ENCODE measurements at regions of chr7 and their contacts with region 1.

Region 1: DNA sequence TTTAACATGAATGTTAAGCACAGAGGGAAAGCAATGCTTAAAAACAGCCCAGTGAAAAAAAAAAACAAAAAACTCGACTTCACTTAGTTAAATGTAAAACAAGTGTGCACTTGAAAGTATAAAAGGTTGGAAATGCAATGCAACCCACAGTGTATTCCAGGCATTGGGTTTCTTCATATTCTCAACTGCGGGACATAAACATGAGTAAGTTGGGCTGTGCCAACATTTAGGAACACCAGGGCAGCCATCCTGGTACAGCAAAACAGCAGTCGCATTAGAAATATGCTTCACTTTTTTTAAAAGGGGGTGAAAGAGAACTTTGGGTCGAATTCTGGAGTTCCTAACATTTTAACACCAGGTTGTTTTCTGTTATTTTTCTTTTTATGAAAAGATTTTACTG is 937 bp downstream of the STEAP1 start:
- DNase-seq: no peak
- H3K4me3 ChIP-seq: no peak overlapping the region; the same call in 1 of the 2 replicates
- H3K27ac ChIP-seq: no peak overlapping the region
- H3K27me3 ChIP-seq: no peaks in the 10 kb centered on the region
- CTCF ChIP-seq: no peak

Region 2: DNA sequence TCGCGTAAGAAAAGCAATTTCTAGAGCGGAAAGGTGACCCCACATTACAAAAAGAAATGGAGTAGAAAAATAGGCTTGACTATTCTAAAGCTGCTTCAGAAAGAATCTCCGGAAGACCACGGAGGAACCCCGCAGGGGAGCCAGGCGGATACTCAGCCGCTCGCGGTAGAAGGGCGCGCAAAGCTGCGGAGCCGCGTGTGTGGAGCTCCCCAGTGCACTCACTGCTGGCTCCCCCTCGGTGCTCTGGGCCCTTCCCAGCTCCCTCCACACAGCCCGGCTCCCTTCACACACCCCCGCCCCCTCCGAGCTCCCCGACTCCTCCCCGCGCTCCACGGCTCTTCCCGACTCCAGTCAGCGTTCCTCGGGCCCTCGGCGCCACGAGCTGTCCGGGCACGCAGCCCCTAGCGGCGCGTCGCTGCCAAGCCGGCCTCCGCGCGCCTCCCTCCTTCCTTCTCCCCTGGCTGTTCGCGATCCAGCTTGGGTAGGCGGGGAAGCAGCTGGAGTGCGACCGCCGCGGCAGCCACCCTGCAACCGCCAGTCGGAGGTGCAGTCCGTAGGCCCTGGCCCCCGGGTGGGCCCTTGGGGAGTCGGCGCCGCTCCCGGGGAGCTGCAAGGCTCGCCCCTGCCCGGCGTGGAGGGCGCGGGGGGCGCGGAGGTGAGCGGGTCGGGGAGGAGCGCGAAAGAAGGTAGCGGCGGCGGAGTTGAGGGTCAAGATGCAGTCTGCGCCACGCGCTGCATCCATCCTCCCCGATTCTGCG is 56.4 kb after region 1 on chr7 and contains the start of gene STEAP2:
- CTCF ChIA-PET with region 1: interaction called, 15 read pairs
- POLR2A ChIA-PET with region 1: interaction called, 8 read pairs
- DNase-seq: peak; percentile 73
- H3K4me3 ChIP-seq: peak within 1 kb of the TSS; percentile 67
- H3K27ac ChIP-seq: peak within 1 kb of the TSS; percentile 59
- H3K27me3 ChIP-seq: no peaks in the 10 kb centered on the region
- CTCF ChIP-seq: peak; percentile 75
- polyA plus RNA-seq, gene STEAP2: 5.4 and 6.4 TPM in 2 replicates

Region 3: DNA sequence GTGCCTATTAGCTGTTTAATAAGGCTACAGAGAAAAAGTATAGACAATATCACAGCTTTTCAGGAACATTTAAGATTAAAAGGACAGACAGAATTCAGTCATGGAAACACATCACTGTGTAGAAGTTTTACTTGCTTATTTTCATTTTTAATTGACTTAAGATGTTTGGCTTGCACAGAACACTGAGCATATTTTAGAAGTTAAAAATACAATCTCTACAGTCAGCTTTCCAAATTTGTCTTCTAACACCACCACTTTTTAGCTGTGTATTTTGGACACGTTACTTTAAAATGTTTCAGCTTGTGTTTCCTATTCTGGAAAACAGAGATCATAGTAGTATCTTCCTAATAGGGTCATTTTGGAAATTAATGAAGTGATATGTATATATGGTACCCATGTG is 101.6 kb after region 1 on chr7:
- CTCF ChIA-PET with region 1: interaction called, 16 read pairs
- POLR2A ChIA-PET with region 1: no interaction called
- DNase-seq: no peak
- H3K4me3 ChIP-seq: no peak overlapping the region
- H3K27ac ChIP-seq: no peak overlapping the region
- H3K27me3 ChIP-seq: no peaks in the 10 kb centered on the region
- CTCF ChIP-seq: no peak

Region 4: GRCh38 chr7:90262438-90262837 is 107.2 kb after region 1 on chr7:
- CTCF ChIA-PET with region 1: interaction called, 26 read pairs
- POLR2A ChIA-PET with region 1: no interaction called
- DNase-seq: no peak
- H3K4me3 ChIP-seq: no peak overlapping the region
- H3K27ac ChIP-seq: no peak overlapping the region
- H3K27me3 ChIP-seq: no peaks in the 10 kb centered on the region
- CTCF ChIP-seq: peak; percentile 57

Region 5: GRCh38 chr7:90298145-90299038 is 143.2 kb after region 1 on chr7:
- CTCF ChIA-PET with region 1: interaction called, 18 read pairs
- POLR2A ChIA-PET with region 1: no interaction called
- DNase-seq: peak; percentile 24
- H3K4me3 ChIP-seq: no peak overlapping the region
- H3K27ac ChIP-seq: no peak overlapping the region
- H3K27me3 ChIP-seq: no peaks in the 10 kb centered on the region
- CTCF ChIP-seq: peak; percentile 77

Region 6: GRCh38 chr7:90424720-90425119 is 269.5 kb after region 1 on chr7:
- CTCF ChIA-PET with region 1: interaction called, 83 read pairs
- POLR2A ChIA-PET with region 1: no interaction called
- DNase-seq: no peak
- H3K4me3 ChIP-seq: no peak overlapping the region
- H3K27ac ChIP-seq: no peak overlapping the region
- H3K27me3 ChIP-seq: no peaks in the 10 kb centered on the region
- CTCF ChIP-seq: no peak

Region 7: DNA sequence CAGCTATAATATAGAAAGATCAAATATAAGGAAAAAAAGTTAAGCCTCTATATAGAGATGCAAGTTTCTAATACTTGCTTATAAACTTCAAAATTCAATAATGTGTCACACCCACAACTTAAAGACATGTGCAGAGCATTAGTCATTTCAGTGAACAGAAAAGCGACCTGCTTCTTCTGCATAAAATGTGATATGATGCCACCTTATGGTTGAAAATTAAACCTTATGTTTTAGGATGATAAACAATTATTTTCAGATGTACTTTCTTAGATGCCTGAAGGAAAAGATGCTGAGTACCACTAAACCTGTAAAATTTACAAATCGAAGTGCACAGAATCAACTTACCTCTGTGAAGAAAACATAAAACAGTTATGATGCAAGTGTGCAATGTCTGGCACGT is 1629.3 kb after region 1 on chr7:
- CTCF ChIA-PET with region 1: interaction called, 10 read pairs
- POLR2A ChIA-PET with region 1: no interaction called
- DNase-seq: peak; percentile 8
- H3K4me3 ChIP-seq: no peak overlapping the region
- H3K27ac ChIP-seq: no peak overlapping the region
- H3K27me3 ChIP-seq: peaks cover 4% of the 10 kb centered on the region
- CTCF ChIP-seq: peak; percentile 34